Dendritic cell treated with granulocyte-macrophage colony-stimulating factor and Interleukin-4, amounts not matched to agents 40 ng/mL and 50 ng/mL, for 4 days (primary cell): ENCODE measurements at regions of chr3 and their contacts with region 1.

Region 1: DNA sequence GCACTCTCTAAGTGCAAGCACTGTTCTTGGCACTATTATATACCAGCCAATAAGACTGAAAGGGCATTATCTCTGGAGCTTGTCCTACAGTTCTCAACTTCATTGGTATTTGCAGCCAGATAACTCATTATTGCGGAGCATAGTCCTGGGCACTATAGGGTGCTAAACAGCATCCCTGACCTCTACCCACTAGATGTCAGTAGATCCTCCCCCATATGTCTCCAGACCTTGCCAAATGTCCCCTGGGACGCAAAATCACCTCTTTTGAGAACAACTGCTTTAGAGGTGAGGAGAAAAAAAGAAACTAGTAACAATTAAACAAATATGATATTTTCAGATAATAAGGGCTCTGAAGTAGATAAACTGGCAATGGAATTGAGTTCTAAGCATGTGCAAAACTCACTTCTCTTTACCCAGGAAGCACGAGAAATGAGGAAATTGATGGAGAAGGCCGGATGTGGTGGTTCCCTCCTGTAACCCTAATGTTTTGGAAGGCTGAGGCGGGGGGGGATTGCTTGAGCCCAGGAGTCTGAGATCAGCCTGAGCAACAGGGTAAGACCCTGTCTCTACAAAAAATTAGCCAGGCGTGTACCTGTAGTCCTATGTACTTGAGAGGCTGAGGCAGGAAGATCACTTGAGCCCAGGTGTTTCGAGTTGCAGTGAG is 61.4 kb downstream of the FRMD4B start:
- H3K4me3 Mint-ChIP-seq: peak overlapping the region; percentile 58
- H3K27ac Mint-ChIP-seq: peak overlapping the region; percentile 96
- H3K4me1 Mint-ChIP-seq: peaks cover 78% of the 10 kb centered on the region
- H3K27me3 Mint-ChIP-seq: no peaks in the 10 kb centered on the region

Region 2: DNA sequence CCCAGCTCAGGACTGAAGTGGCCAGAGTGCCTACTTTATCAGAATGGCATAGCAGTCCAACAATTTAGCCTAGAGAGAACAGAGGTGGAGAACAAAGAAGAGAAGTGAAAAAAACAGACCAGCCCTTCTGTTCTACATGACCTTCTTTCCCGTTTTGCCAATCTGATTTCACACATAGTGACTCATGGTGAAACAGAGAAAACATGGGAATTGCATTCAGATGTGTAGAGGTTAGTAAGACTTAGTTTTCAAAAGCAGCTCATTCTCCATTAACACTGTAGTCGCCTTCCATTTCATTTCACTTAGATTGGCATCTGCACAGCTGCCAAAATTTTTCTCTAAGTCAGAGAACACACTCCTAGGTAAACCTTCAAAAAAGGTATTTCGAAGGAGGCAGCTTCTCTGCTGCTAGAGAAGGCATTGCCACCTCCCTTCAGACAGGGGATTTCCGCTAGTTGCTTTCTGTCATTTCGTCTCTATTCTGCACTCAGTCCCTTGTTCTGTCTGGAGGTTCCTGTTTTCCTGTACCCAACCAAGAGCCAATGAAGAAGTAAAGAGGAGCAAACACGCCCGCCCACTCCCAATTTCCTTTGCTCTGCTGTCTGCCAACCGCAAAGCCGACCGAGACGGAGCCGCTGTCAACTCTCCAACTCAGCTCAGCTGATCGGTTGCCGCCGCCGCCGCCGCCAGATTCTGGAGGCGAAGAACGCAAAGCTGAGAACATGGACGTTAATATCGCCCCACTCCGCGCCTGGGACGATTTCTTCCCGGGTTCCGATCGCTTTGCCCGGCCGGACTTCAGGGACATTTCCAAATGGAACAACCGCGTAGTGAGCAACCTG is 239.9 kb before region 1 on chr3 and contains the start of gene ARL6IP5:
- intact Hi-C with region 1: loop called (anchors 10 kb)
- H3K4me3 Mint-ChIP-seq: peak within 1 kb of the TSS; percentile 94
- H3K27ac Mint-ChIP-seq: peak within 1 kb of the TSS; percentile 98
- H3K4me1 Mint-ChIP-seq: peaks cover 39% of the 10 kb centered on the region
- H3K27me3 Mint-ChIP-seq: no peaks in the 10 kb centered on the region

Region 3: DNA sequence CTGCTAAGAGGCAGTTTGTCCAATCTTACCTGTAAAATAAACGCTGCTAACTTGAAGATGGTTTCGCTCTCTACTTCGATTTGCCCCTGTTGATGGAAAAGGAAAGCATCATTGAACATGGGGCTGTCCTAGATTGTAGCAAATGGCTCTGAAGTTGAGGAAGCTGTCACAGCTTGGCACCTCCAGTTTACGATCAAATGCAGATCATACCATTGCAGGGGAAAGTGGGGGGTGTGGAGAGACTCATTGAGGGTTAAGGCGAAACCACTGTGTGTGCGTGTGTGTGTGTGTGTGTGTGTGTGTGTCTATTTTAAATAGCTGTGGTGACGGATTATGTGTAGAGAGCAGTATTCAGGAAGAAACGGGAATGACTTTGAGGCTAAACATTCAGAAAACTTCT is 74.5 kb before region 1 on chr3:
- intact Hi-C with region 1: no loop called
- H3K4me3 Mint-ChIP-seq: no peak overlapping the region
- H3K27ac Mint-ChIP-seq: no peak overlapping the region
- H3K4me1 Mint-ChIP-seq: no peaks in the 10 kb centered on the region
- H3K27me3 Mint-ChIP-seq: no peaks in the 10 kb centered on the region

Region 4: DNA sequence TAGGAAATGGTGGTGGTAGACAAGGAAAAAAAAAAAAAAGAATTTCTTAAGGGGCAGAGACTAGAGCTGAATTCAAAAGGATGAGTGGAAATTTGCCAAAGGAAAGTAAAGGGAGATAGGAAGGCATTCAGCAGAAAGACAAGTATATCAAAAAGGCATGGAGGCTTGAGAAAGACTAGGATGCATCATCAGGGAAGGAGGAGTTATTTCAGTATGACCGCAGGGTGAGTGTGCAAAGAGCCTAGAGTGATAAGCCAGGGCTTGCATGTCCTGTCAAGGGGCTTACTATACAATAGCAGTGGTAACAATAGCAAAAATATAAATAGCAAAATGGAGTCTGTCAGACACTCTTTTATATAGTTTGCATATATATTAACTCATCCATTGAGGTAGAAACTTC is 50.6 kb before region 1 on chr3:
- intact Hi-C with region 1: no loop called
- H3K4me3 Mint-ChIP-seq: no peak overlapping the region
- H3K27ac Mint-ChIP-seq: no peak overlapping the region
- H3K4me1 Mint-ChIP-seq: no peaks in the 10 kb centered on the region
- H3K27me3 Mint-ChIP-seq: no peaks in the 10 kb centered on the region

Region 5: DNA sequence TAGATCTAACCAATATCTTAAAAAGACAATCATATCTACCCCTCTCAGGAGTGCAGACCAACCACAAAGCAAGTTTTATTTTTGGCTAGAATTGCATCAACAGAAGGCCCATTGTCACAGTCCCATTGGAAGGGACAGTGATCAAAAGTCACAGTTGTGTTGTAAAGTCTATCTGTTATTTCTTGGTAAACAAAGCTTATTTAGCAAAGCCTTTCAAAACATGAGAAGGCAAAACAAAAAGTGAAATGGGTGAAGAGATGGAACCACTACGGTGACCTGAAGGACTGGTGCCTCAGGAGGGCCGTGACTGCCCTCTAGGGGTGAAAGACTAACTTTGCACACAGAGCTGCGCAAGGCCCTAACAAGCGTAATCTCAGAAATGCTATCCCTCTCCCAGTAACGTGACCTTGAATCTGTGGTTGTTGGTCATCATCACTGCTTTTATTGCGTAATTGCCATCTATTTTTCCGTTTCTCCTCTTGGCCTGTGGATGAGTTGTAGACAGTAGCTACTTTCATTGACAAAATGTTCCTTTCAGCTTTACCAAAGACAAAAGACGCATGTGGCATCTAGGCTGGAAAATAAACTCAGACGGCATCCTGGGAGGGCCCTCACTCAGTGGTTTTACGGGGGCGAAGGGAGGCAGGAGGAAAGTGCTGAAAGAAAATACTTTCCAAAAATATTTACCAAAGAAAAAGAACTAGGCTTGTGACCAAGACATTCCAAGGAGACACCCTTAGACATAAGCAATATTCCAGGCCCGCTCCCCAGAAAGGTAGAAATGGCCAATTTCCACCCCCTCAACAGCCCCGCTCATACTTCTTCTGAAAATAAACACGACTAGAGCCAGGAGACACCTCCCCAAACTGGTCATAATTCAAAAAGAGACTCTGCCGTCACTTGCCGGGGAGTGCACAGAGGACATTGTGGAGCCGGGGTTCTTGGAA is 18.0 kb before region 1 on chr3:
- intact Hi-C with region 1: loop called (anchors 2 kb)
- H3K4me3 Mint-ChIP-seq: no peak overlapping the region
- H3K27ac Mint-ChIP-seq: peak overlapping the region; percentile 51
- H3K4me1 Mint-ChIP-seq: peaks cover 16% of the 10 kb centered on the region
- H3K27me3 Mint-ChIP-seq: no peaks in the 10 kb centered on the region

Region 6: GRCh38 chr3:69353503-69353902 is 29.0 kb after region 1 on chr3:
- intact Hi-C with region 1: loop called (anchors 1 kb)
- H3K4me3 Mint-ChIP-seq: peak overlapping the region; percentile 76
- H3K27ac Mint-ChIP-seq: peak overlapping the region; percentile 97
- H3K4me1 Mint-ChIP-seq: peaks cover 54% of the 10 kb centered on the region
- H3K27me3 Mint-ChIP-seq: no peaks in the 10 kb centered on the region

Region 7: GRCh38 chr3:69364354-69364753 is 39.9 kb after region 1 on chr3:
- intact Hi-C with region 1: no loop called
- H3K4me3 Mint-ChIP-seq: no peak overlapping the region
- H3K27ac Mint-ChIP-seq: no peak overlapping the region
- H3K4me1 Mint-ChIP-seq: peaks cover 18% of the 10 kb centered on the region
- H3K27me3 Mint-ChIP-seq: no peaks in the 10 kb centered on the region

Region 8: DNA sequence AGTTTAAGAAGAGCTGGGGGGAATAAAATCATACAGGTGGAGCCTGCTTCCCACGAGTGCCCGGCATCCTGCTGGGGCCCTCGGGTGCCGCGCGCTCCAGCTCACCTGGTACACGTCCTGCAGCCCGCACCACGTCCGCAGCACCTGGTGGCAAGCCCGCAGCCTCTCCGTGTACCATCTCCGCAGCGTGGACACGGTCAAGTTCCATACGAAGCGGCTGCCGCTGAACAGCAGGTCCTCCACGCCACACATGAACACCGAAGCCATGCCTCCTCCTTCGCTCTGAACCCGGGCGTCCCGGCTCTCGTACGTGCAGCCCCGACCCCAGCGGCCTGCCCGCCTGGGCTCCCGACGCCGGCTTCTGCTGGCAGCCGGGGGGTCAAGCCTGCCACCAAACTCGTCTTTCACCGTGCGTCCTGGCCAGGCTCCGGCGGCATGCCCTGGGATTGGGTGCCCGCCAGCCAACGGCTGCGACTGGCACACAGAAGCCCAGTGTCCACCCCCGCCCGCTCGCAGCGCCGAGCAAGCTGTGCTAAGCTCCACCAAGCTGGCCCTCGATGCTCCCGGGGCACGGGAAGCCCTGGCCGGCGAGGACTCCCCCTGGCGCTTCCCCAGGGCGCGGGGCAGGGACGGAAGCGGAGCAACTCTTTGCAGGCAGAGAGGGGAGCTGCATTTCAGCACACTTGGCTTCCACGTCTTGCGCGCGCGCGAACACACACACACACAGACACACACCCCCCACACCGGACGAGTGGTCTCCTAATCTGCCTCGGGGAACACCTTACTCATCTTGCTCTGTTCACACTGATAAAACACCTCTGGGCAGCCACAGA is 61.4 kb after region 1 on chr3 and contains the start of gene FRMD4B:
- intact Hi-C with region 1: loop called (anchors 5 kb)
- H3K4me3 Mint-ChIP-seq: peak within 1 kb of the TSS; percentile 84
- H3K27ac Mint-ChIP-seq: peak within 1 kb of the TSS; percentile 90
- H3K4me1 Mint-ChIP-seq: peaks cover 37% of the 10 kb centered on the region
- H3K27me3 Mint-ChIP-seq: peaks cover 25% of the 10 kb centered on the region

Region 9: GRCh38 chr3:69410250-69410649 is 85.8 kb after region 1 on chr3:
- intact Hi-C with region 1: loop called (anchors 1 kb)
- H3K4me3 Mint-ChIP-seq: no peak overlapping the region
- H3K27ac Mint-ChIP-seq: peak overlapping the region; percentile 67
- H3K4me1 Mint-ChIP-seq: peaks cover 24% of the 10 kb centered on the region
- H3K27me3 Mint-ChIP-seq: no peaks in the 10 kb centered on the region